T-cell (primary cell): ENCODE measurements at regions of chr18 and their contacts with region 1.

Region 1: GRCh38 chr18:2183432-2183831 is 387.9 kb downstream of the METTL4 start:
- DNase-seq: no peak
- ATAC-seq: no peak
- H3K4me3 ChIP-seq: no peak overlapping the region
- H3K4me3 Mint-ChIP-seq: no peak overlapping the region
- H3K27ac ChIP-seq: no peak overlapping the region
- H3K27ac Mint-ChIP-seq: no peak overlapping the region
- H3K4me1 ChIP-seq: no peaks in the 10 kb centered on the region
- H3K4me1 Mint-ChIP-seq: no peaks in the 10 kb centered on the region
- H3K27me3 ChIP-seq: peaks cover 0 to 3% of the 10 kb centered on the region in 2 experiments
- H3K27me3 Mint-ChIP-seq: peaks cover 8 to 12% of the 10 kb centered on the region in 2 donors

Region 2: GRCh38 chr18:2171840-2172625 is 11.4 kb before region 1 on chr18:
- CTCF ChIA-PET with region 1: no interaction called
- POLR2A ChIA-PET with region 1: interaction called in 1 of 2 experiments, 10 read pairs
- DNase-seq: no peak
- ATAC-seq: no peak
- H3K4me3 ChIP-seq: no peak overlapping the region
- H3K4me3 Mint-ChIP-seq: no peak overlapping the region
- H3K27ac ChIP-seq: no peak overlapping the region
- H3K27ac Mint-ChIP-seq: no peak overlapping the region
- H3K4me1 ChIP-seq: no peaks in the 10 kb centered on the region
- H3K4me1 Mint-ChIP-seq: no peaks in the 10 kb centered on the region
- H3K27me3 ChIP-seq: no peaks in the 10 kb centered on the region
- H3K27me3 Mint-ChIP-seq: peaks cover 0 to 6% of the 10 kb centered on the region in 2 donors

Region 3: GRCh38 chr18:2197945-2198344 is 14.5 kb after region 1 on chr18:
- CTCF ChIA-PET with region 1: no interaction called
- POLR2A ChIA-PET with region 1: no interaction called
- DNase-seq: no peak
- ATAC-seq: no peak
- H3K4me3 ChIP-seq: no peak overlapping the region
- H3K4me3 Mint-ChIP-seq: no peak overlapping the region
- H3K27ac ChIP-seq: no peak overlapping the region
- H3K27ac Mint-ChIP-seq: no peak overlapping the region
- H3K4me1 ChIP-seq: no peaks in the 10 kb centered on the region
- H3K4me1 Mint-ChIP-seq: no peaks in the 10 kb centered on the region
- H3K27me3 ChIP-seq: no peaks in the 10 kb centered on the region
- H3K27me3 Mint-ChIP-seq: no peaks in the 10 kb centered on the region